Right ventricle myocardium inferior (tissue), 1 donor: ENCODE measurements at regions of chr10 and their contacts with region 1.

Region 1: GRCh38 chr10:80751940-80752339 is 214.2 kb downstream of the SH2D4B start:
- DNase-seq: no peak
- ATAC-seq: no peak

Region 2: GRCh38 chr10:80632742-80633141 is 119.2 kb before region 1 on chr10:
- intact Hi-C with region 1: no loop called
- DNase-seq: no peak
- ATAC-seq: no peak

Region 3: DNA sequence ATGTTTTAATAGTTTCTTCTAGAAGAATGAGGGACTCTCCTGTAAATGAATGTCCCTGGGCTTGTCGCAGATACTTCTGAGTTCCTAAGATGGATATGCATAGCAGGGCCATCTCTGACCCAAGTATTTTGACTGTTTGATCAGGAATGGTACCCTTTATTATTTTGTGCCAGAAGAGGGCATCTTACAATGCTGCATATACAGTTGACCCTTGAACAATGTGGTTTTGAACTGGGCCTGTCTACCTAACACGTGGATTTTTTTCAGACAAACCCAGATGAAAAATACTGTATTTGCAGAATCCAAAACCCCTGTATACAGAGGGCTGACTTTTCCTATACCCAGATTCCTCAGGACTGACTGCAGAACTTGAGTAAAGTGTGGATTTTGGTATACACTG is 36.8 kb after region 1 on chr10:
- intact Hi-C with region 1: loop called (anchors 2 kb)
- DNase-seq: no peak
- ATAC-seq: no peak